PC-3 (cell line): ENCODE measurements at regions of chr19 and their contacts with region 1.

Region 1: DNA sequence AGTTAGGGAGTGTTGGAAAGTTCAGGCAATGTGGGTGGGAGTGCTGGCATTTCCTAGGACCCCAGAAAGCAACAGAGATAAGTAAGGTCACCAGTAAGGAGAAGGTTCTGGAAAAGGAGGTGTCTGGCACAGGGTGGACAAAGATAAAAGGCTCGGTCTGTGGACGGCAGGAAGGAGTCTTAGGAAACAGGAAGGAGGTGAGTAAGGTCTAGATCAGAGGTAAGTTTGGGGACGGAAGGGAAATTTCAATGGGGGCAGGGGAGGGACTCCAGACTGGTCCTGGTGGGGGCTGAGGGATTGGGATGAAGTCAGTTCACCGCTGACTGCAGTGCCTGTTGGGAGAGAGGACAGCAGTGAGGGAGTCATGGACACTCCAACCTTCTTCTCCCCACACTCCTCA is 7.8 kb upstream of the OPA3 start:
- DNase-seq: peak; percentile 41
- ATAC-seq: peak; percentile 66
- H3K4me3 ChIP-seq: no peak overlapping the region
- H3K27ac ChIP-seq: peak overlapping the region; percentile 37; the same call in 1 of the 2 replicates
- H3K4me1 ChIP-seq: peaks cover 8% of the 10 kb centered on the region
- H3K27me3 ChIP-seq: no peaks in the 10 kb centered on the region
- CTCF ChIP-seq: no peak

Region 2: GRCh38 chr19:45615795-45616708 is 23.7 kb after region 1 on chr19:
- CTCF ChIA-PET with region 1: no interaction called
- POLR2A ChIA-PET with region 1: interaction called, 13 read pairs
- intact Hi-C with region 1: no loop called
- DNase-seq: peak; percentile 80
- ATAC-seq: peak; percentile 72
- H3K4me3 ChIP-seq: no peak overlapping the region
- H3K27ac ChIP-seq: peak overlapping the region; percentile 73
- H3K4me1 ChIP-seq: peaks cover 24% of the 10 kb centered on the region
- H3K27me3 ChIP-seq: no peaks in the 10 kb centered on the region
- CTCF ChIP-seq: no peak